ENCODE measurements at regions of chr6 and their contacts with region 1.

Region 1: GRCh38 chr6:83067448-83068413 is at the start of gene DOP1A:
- DNase-seq: peak; percentile 96

Region 2: DNA sequence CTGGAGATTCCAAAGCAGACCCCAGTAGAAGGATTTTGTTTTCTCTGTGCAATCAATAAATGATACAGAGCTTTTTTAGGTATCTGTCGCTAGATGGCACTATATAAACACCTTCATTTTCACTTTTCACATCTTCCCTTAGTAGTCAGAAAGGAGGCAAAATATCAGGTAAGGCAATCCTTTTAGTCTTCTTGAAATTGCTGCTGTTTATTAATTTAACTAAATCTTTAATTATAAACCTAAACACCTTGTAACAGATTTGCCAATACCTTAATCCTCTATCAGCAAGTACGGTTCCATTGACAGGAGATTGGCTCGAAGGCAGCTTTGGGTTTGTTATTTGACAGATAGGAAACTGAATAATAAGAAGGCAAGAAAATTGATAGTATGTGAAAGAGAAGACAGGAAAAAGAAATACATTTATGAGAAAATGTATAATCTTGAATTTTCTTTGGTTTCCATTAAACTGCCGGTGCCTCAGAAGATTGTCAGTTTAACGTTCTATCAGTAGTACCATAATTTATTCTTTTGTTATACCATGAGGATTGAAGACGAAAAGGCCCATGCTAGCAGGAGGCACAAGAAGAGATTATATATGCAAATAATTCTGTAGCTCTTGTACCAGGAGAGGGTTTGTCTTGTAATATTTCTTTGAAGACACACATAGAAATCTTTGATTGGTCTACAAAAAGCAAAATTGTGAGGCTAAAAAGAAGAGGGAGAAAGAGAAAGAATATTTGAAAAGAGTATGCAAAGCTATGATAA is 796.7 kb before region 1 on chr6:
- in situ Hi-C with region 1: loop called (anchors 25 kb)
- DNase-seq: peak; percentile 47

Region 3: DNA sequence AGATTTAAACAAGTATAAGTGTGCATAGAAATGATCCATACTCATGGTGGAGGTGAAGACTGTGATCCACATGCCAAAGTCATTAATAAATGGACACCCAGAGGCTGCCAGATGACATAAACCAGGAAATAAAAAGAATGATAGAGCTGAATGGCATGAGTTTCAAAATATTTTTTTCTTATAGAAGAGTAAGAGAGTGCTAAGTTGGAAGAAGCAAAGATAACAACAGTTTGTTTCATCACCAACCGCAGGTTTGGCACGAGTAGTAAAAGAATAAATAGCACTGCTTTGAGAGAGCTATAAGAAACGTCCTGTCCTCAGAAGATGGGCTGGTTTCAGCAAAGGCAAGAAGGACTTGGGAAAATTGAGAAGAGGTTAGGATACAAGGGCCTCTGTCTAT is 249.0 kb before region 1 on chr6:
- in situ Hi-C with region 1: no loop called
- DNase-seq: no peak

Measured in KBM-7 (cell line).